ENCODE measurements at regions of chr22 and their contacts with region 1.

Region 1: DNA sequence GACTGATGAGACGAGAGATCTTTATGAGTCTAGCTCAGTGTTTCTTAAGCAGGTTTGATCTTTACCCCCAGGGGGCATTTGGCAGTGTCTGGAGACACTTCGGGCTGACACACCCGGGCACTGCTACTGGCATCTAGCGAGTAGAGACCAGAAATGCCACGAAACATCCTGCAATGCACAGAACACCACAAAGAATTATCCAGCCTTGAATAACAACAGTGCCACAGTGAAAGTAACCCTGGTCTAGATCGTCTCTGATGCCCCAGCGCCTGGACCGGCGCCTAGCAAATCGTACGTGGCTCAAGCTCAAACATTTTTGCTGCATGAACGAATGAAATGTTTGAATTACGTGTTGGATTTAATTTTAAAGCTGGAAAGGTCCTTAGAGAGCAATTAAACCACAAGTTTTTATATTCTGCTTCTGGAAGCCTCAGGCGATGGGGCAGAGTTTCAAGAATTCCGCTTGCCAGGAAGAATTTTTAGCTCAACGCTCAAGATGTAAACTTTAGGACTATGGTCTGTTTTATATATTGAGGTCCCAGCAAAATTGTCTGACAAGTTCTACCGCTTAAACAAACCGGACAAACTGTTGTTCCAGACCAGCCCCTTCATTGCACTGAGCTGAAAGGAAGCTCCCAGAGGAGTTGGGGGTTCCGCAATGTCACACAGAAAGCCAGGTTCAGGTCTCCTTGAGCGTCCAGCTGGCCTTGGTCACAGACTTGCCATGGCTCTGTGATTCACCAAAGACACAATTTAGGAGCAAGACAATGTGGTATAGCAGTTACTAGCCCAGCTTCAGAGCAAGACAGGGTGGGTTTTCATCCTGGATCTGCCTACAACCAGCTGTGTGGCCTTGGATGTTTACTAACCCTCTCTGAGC is 44.2 kb upstream of the SMTN start:
- DNase-seq: peak; percentile 74 to 85
- ATAC-seq: peak; percentile 76
- H3K4me3 ChIP-seq: peak overlapping the region in 1 of 2 donors; percentile 9
- H3K27ac ChIP-seq: peak overlapping the region; percentile 31 to 89
- H3K4me1 ChIP-seq: peaks cover 0 to 3% of the 10 kb centered on the region in 2 donors
- H3K27me3 ChIP-seq: no peaks in the 10 kb centered on the region

Region 2: GRCh38 chr22:30955153-30955552 is 81.8 kb before region 1 on chr22:
- intact Hi-C with region 1: no loop called
- DNase-seq: no peak
- ATAC-seq: no peak
- H3K4me3 ChIP-seq: no peak overlapping the region
- H3K27ac ChIP-seq: no peak overlapping the region
- H3K4me1 ChIP-seq: peaks cover 4% of the 10 kb centered on the region in 2 donors
- H3K27me3 ChIP-seq: no peaks in the 10 kb centered on the region

Region 3: DNA sequence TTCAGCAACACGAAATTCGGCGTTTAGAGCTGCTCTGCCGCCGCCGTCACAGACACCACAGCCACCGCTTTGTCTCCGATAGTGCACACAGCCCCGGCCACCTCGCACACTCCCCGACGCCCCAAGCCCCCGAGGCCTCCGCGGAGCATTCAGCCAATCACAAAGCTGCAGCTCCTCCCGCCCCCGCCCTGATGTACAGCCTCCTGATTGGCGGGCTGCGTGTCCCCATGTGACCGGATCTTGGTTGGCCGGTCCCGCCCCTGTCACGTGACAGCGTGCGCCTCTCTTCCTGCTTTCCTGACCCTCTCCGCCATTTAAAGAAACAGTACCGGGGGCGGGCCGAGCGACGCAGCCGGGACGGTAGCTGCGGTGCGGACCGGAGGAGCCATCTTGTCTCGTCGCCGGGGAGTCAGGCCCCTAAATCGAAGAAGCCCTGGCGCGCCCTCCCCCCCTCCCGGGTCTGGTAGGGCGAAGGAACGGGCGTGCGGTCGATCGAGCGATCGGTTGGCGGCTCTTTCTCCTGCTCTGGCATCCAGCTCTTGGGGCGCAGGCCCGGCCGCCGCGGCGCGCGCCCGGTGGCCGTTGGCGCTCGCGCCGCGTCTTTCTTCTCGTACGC is 67.9 kb before region 1 on chr22 and contains the start of gene TUG1:
- intact Hi-C with region 1: loop called (anchors 5 kb)
- DNase-seq: peak; percentile 99
- ATAC-seq: peak; percentile 99
- H3K4me3 ChIP-seq: peak within 1 kb of the TSS; percentile 70 to 83
- H3K27ac ChIP-seq: peak within 1 kb of the TSS; percentile 55 to 64
- H3K4me1 ChIP-seq: peaks cover 0 to 4% of the 10 kb centered on the region in 2 donors
- H3K27me3 ChIP-seq: no peaks in the 10 kb centered on the region
- total RNA-seq, gene TUG1: 86.1 to 89.4 TPM

Region 4: GRCh38 chr22:30992565-30992964 is 44.3 kb before region 1 on chr22:
- intact Hi-C with region 1: loop called (anchors 5 kb)
- DNase-seq: no peak
- ATAC-seq: no peak
- H3K4me3 ChIP-seq: no peak overlapping the region
- H3K27ac ChIP-seq: peak overlapping the region; percentile 61 to 85
- H3K4me1 ChIP-seq: peaks cover 4 to 6% of the 10 kb centered on the region in 2 donors
- H3K27me3 ChIP-seq: no peaks in the 10 kb centered on the region

Measured in aorta (tissue), 5 donors.